Heart left ventricle (tissue), 16 donors: ENCODE measurements at regions of chr20 and their contacts with region 1.

Region 1: GRCh38 chr20:52083627-52084232 is 107.8 kb downstream of the ZFP64 start:
- DNase-seq: peak in 2 of 5 donors; percentile 40 to 45
- ATAC-seq: peak in 3 of 4 donors; percentile 42 to 64 (median 56)
- H3K4me3 ChIP-seq: no peak overlapping the region
- H3K27ac ChIP-seq: no peak overlapping the region
- H3K4me1 ChIP-seq: no peaks in the 10 kb centered on the region
- H3K27me3 ChIP-seq: no peaks in the 10 kb centered on the region
- CTCF ChIP-seq: peak; percentile 29 to 71 (median 56)
- POLR2A ChIP-seq: no peak

Region 2: DNA sequence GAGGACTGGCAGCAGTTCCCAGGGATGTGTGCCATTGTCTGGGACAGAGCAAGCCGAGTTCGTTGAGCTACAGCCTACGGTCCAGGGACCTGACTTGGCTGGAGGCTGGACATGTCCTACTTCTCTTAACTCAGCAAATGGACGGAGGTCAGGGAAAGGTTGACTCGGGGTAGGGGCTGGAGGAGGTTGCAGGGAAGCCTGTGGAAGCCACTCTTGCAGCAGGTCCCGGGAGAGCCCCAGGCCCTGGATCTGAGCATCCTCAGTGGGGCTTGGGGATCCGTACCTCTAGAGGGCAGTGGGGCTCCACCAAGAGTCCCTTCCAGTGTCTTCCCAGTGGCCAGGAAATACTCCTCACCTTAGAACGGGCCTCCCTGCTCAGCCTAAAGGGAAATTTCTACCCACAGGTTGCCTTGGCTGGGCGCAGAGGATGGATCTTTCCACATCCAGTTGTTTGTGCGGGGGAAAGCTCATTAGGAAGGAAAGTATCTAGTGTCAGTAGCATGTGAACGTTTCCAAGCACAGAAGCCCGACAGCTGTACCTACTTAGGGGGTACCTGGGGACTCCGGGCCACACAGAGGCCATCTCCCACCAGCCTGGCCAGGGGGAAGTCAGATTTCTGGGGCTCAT is 711.4 kb before region 1 on chr20:
- intact Hi-C with region 1: loop called in 4 of 10 experiments (anchors 5 to 10 kb)
- DNase-seq: peak; percentile 59 to 74 (median 66)
- ATAC-seq: peak; percentile 82 to 95 (median 90)
- H3K4me3 ChIP-seq: no peak overlapping the region
- H3K27ac ChIP-seq: no peak overlapping the region
- H3K4me1 ChIP-seq: peaks cover 0 to 24% (median 8%) of the 10 kb centered on the region in 12 donors
- H3K27me3 ChIP-seq: no peaks in the 10 kb centered on the region
- CTCF ChIP-seq: peak; percentile 73 to 92 (median 86)
- POLR2A ChIP-seq: no peak

Region 3: GRCh38 chr20:51703400-51704287 is 380.1 kb before region 1 on chr20:
- intact Hi-C with region 1: loop called in 8 of 10 experiments (anchors 5 to 10 kb)
- DNase-seq: no peak
- ATAC-seq: no peak
- H3K4me3 ChIP-seq: no peak overlapping the region
- H3K27ac ChIP-seq: no peak overlapping the region
- H3K4me1 ChIP-seq: no peaks in the 10 kb centered on the region
- H3K27me3 ChIP-seq: no peaks in the 10 kb centered on the region
- CTCF ChIP-seq: no peak
- POLR2A ChIP-seq: no peak

Region 4: DNA sequence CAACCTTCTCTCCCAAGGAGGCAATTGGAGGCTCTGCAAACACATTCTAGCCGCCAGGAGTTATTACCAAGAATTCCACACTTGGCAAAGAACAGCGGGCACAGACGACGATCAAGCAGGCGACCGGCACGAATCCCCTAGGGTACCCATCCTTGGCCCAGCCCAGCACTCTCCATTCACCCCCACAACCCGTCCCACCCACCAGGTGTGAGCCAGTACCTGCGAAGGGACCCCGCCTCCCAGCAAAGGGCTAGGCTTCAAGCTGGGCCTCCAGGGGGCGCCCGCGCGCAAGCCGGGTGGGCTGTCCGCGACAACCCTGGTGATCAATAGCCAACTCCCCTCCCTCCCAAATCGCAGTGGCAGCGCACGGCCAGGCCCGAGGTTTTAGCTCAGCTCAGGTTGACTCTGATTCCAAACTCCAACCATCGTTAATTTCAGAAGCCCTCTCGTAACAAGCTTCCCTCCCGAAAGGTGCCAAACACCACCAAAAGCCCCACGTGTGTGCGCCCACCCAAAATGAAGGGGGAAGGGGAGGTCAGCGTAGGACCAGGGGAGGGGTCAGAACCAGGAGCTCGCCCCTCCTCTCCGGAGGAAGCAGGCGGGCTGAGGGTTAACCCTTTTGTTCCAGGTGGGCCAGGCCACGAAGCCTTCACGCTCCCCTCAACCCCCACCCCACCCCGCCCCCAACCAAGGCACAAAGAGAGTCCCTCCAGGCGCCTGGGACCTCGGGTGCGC is 283.5 kb before region 1 on chr20:
- intact Hi-C with region 1: loop called in 5 of 10 experiments (anchors 2 to 5 kb)
- DNase-seq: peak; percentile 27 to 75 (median 44)
- ATAC-seq: peak in 3 of 4 donors; percentile 49 to 61 (median 61)
- H3K4me3 ChIP-seq: peak overlapping the region in 11 of 12 donors; percentile 17 to 60 (median 51)
- H3K27ac ChIP-seq: no peak overlapping the region
- H3K4me1 ChIP-seq: peaks cover 0 to 24% (median 14%) of the 10 kb centered on the region in 12 donors
- H3K27me3 ChIP-seq: peaks cover 22 to 71% (median 36%) of the 10 kb centered on the region in 9 donors
- CTCF ChIP-seq: peak; percentile 54 to 83 (median 76)
- POLR2A ChIP-seq: no peak

Region 5: GRCh38 chr20:51899668-51900067 is 184.1 kb before region 1 on chr20:
- intact Hi-C with region 1: no loop called
- DNase-seq: no peak
- ATAC-seq: no peak
- H3K4me3 ChIP-seq: no peak overlapping the region
- H3K27ac ChIP-seq: no peak overlapping the region
- H3K4me1 ChIP-seq: no peaks in the 10 kb centered on the region
- H3K27me3 ChIP-seq: no peaks in the 10 kb centered on the region
- CTCF ChIP-seq: no peak
- POLR2A ChIP-seq: no peak